Cardiac septum (tissue), 1 donor: ENCODE measurements at regions of chr11 and their contacts with region 1.

Region 1: DNA sequence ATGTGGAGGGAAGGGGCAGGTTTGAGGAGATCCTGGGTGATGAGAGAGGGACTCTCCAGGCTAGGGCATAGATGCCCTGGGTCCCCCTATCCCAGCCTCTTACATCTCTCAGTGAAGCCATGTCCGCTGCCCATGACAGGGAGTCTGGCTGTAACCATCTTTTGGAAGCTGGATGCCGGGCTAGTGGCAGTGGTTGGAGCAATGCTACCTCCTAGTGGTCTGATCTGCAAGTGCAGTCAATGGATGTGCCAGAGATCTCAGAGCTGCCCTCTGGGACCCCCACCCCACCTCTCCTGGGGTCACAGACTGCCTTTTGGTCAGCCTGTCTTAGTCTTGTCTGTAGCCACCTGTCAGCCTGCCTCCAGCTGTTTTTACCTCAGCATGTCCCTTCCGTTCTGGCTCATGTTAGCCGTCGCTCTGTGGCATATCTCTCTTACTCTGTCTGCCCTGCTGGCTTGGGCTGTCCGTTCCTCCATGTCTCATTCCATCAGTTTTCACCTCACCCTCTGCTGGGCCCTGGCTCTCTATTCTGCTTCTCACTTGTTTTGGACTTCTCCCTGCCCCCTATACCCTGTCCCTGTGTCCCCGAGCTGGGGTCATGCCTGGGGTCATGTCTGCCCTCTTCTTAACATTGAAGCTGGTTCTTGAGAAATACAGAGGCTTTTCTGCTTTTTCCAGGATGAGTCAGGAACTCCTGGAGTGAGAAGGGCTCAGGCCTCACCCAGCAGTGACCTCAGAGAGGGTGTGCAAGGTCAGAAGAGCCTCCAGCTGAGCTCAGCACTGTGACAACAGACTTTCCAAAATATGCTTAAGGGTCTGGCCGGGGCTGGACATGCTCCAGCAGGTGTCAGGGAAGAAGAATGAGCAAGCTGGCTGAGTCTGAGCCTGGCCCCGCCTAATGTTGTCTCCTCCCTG is 52.0 kb upstream of the THY1 start:
- DNase-seq: no peak

Region 2: GRCh38 chr11:119381181-119381988 is 93.6 kb before region 1 on chr11 and contains the start of gene USP2:
- intact Hi-C with region 1: loop called (anchors 5 kb)
- DNase-seq: peak; percentile 98
- total RNA-seq, gene USP2: 80.0 TPM